HAP-1 (cell line): ENCODE measurements at regions of chr9 and their contacts with region 1.

Region 1: GRCh38 chr9:10059044-10059443 is 553.8 kb downstream of the PTPRD start:
- DNase-seq: no peak
- H3K4me3 ChIP-seq: no peak overlapping the region
- H3K4me1 ChIP-seq: no peaks in the 10 kb centered on the region
- H3K27me3 ChIP-seq: 0 out of 2 replicates have a peak, but pooled peaks cover 3% of the 10 kb centered on the region

Region 2: DNA sequence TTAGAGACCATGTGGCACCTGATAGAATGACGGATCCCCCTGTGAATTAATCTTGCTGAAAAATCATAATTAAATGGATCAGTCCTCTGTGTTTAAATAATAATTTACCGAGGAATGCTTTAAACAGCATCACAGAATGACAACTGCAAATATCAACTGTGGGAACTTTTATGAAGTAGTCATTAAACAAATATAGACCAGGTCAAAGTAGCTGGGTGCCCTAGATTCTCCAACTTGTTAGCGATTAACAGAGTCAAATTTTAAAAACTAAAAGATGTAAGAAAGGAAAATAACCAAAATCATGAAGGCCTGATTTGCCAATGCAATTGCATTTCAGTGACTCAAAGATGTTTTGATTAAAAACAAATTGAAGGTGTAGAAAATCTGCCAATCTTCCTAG is 379.6 kb before region 1 on chr9:
- in situ Hi-C with region 1: no loop called
- DNase-seq: no peak
- H3K4me3 ChIP-seq: no peak overlapping the region
- H3K4me1 ChIP-seq: no peaks in the 10 kb centered on the region
- H3K27me3 ChIP-seq: no peaks in the 10 kb centered on the region

Region 3: DNA sequence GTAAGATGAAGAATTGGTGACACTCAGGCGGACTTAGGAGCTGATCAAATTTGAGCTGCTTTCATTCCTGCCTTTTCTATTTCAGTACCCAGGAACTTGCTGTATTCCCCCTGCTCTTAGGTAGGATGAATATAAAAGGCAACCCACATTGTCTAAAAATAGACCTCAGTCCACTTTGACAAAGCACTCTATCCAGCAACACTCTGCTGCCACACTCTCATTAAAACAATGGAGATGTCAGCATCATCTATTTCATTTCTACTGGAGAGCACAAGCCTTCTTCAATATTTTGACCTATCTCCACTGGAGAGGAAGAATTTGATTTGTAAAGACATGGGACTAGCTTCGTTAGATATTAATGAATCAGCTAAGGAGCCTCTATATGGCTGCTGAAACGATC is 85.3 kb after region 1 on chr9:
- in situ Hi-C with region 1: no loop called
- DNase-seq: no peak
- H3K4me3 ChIP-seq: no peak overlapping the region
- H3K4me1 ChIP-seq: no peaks in the 10 kb centered on the region
- H3K27me3 ChIP-seq: 0 out of 2 replicates have a peak, but pooled peaks cover 2% of the 10 kb centered on the region

Region 4: DNA sequence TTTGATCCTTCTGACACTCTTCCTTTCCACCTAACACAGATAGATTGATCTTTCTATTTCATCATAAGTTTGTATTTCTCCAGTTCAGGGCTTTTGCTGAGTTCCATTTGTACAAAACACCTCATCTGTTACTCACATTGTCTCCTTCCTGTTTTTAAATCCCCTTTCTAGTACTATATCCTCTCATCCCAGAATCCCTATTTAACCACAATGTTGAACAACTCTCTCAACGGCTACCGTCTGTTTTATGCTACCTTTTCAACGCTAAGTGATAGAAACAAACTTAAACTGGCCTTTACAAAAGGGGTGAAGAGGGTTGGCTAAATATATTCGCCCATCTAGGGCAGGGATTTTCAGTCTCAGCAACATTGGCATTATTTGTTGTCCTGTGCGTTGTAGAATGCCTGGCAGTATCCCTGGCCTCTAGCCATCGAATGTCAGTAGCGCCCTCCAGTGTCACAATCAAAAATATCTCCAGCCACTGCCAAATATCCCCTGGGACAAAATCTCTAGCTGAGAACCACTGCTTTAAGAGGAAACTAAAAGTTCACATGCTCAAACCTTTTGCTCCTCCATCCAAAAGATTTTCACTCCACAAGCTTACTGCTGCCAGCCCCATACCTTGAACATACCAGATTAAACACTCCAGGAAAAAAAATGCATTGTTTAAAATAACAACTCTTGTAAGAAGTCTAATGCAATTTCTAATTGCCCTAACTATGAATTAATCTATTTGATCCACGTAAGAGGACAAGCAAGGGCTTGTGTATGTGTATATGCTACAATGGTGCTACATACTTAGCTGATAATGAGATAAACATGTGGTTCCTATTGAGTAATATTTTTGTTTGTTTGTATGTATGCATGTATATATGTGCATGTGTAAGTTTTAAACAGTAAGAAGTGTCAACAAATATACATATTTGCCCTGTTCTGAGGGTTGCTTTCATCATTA is 209.8 kb after region 1 on chr9:
- in situ Hi-C with region 1: loop called (anchors 25 kb)
- DNase-seq: peak; percentile 62 to 82
- H3K4me3 ChIP-seq: no peak overlapping the region
- H3K4me1 ChIP-seq: peaks cover 4% of the 10 kb centered on the region; the same call in 1 of the 2 replicates
- H3K27me3 ChIP-seq: no peaks in the 10 kb centered on the region